ENCODE measurements at regions of chr2 and their contacts with region 1.

Region 1: GRCh38 chr2:227774011-227774624 is 28.4 kb downstream of the SCYGR8 start:
- DNase-seq: peak; percentile 69
- ATAC-seq: peak; percentile 96
- H3K4me3 ChIP-seq: peak overlapping the region in 2 of 3 experiments; percentile 37 to 47; a peak in 3 of 6 replicates
- H3K27ac ChIP-seq: no peak overlapping the region
- H3K4me1 ChIP-seq: peaks cover 59% of the 10 kb centered on the region
- H3K27me3 ChIP-seq: peaks cover 0 to 2% of the 10 kb centered on the region in 2 experiments; a peak in 1 of 5 replicates
- CTCF ChIP-seq: peak; percentile 76
- EP300 ChIP-seq: no peak
- POLR2A ChIP-seq: no peak
- RAD21 ChIP-seq: peak; percentile 71; the same call in 1 of the 2 replicates

Region 2: DNA sequence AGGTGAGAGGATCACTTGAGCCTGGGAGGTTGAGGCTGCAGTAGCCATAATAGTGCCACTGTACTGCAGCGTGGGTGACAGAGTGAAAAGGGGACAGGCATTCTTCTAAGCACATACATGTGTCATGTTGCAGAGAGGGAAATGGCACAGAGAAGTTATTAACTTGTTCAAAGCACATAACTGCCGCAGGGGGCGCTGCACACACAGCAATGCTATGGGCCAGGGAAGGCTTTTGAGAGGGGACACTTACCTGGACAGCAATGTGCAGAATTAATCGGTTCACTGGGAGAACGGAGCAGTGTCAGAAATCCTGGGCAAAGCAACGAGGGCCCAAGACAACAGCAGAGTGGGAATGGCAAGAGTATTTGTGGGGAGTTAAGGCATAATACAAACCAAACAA is 26.0 kb before region 1 on chr2:
- CTCF ChIA-PET with region 1: no interaction called
- POLR2A ChIA-PET with region 1: no interaction called
- in situ Hi-C with region 1: no loop called
- intact Hi-C with region 1: no loop called
- DNase-seq: peak; percentile 63
- ATAC-seq: peak; percentile 89
- H3K4me3 ChIP-seq: no peak overlapping the region
- H3K27ac ChIP-seq: no peak overlapping the region
- H3K4me1 ChIP-seq: peaks cover 28% of the 10 kb centered on the region
- H3K27me3 ChIP-seq: peaks cover 0 to 9% of the 10 kb centered on the region in 2 experiments; a peak in 2 of 5 replicates
- CTCF ChIP-seq: peak; percentile 72
- EP300 ChIP-seq: no peak
- POLR2A ChIP-seq: no peak
- RAD21 ChIP-seq: peak; percentile 44; the same call in 1 of the 2 replicates

Region 3: DNA sequence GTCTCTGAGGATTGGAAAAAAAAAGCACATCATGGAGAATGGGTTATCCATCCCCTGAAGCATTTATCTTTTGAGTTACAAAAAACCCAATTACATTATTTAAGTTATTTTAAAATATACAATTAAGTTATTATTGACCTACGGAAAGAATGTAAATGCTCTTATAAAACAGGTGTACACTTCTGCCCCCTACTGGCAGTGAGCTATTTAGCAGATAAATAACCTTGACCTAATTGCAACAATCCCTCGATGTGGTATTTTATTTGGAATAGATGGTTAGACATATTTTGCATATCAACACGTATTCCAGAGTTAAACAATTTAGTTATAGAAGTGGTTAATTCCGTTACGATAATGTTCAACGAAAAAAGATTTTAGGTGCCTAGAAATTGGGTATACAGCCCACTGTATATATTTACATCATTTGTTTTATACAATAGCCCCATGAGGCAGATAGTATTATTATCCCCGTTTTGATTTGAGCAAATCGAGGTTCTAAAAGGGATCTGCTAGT is 88.2 kb after region 1 on chr2:
- CTCF ChIA-PET with region 1: interaction called, 17 read pairs
- POLR2A ChIA-PET with region 1: no interaction called
- in situ Hi-C with region 1: loop called (anchors 5 kb)
- intact Hi-C with region 1: loop called (anchors 1 kb)
- DNase-seq: peak; percentile 65
- ATAC-seq: no peak
- H3K4me3 ChIP-seq: peak overlapping the region in 1 of 3 experiments; percentile 27; a peak in 2 of 6 replicates
- H3K27ac ChIP-seq: no peak overlapping the region
- H3K4me1 ChIP-seq: peaks cover 33% of the 10 kb centered on the region
- H3K27me3 ChIP-seq: peaks cover 4 to 30% of the 10 kb centered on the region in 2 experiments; a peak in 4 of 5 replicates
- CTCF ChIP-seq: peak; percentile 74
- EP300 ChIP-seq: no peak
- POLR2A ChIP-seq: no peak
- RAD21 ChIP-seq: peak; percentile 31; the same call in 1 of the 2 replicates